PC-9 (cell line): ENCODE measurements at regions of chr22 and their contacts with region 1.

Region 1: GRCh38 chr22:29972121-29972520 is 89.1 kb downstream of the MTMR3 start:
- DNase-seq: no peak
- H3K4me3 ChIP-seq: no peak overlapping the region
- H3K27ac ChIP-seq: no peak overlapping the region
- H3K4me1 ChIP-seq: peaks cover 5% of the 10 kb centered on the region; the same call in 1 of the 2 replicates
- H3K27me3 ChIP-seq: no peaks in the 10 kb centered on the region
- CTCF ChIP-seq: no peak

Region 2: DNA sequence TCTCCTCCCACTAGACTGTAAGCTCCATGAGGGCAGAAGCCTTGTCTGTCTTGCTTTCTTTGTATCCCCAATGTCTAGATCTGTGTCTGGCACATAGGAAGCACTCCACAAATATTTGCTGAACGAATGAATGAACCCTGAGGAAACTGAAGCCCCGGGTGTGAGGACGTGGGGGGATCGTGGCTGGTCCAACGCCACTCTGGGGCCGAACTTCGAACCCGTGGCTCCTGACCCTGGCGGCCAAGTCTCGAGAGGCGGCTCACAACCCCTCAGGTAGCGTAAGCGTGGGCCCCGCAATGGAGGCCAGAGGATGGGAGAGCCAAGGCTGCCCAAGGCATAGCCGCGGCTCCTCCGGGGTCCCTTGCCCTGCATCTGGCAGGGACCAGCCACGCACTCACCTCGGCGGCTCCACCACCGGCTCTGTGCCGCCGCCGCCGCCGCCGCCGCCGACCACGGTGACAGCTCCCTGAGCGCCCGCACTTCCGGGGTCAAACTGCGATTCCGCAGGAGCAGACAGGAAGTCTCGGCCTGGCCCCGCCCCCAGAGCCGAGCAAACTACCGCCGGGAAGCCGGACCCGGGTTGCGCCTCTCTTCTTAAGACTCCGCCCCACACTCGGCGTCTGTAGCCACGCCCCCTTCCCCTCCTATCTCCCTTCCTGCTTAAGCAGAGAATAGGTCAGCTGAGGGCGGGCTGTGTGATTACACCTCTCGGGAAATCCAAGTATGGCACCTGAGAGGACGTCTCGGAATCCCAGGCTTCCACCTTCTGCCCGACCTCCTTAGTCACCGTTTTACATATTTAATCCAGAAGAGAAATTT is 134.1 kb before region 1 on chr22 and contains the start of gene ASCC2:
- CTCF ChIA-PET with region 1: no interaction called
- POLR2A ChIA-PET with region 1: interaction called, 24 read pairs
- intact Hi-C with region 1: no loop called
- DNase-seq: peak; percentile 95
- H3K4me3 ChIP-seq: peak within 1 kb of the TSS; percentile 95
- H3K27ac ChIP-seq: peak within 1 kb of the TSS; percentile 67
- H3K4me1 ChIP-seq: peaks cover 32% of the 10 kb centered on the region
- H3K27me3 ChIP-seq: no peaks in the 10 kb centered on the region
- CTCF ChIP-seq: no peak
- total RNA-seq, gene ASCC2: 39.9 and 43.3 TPM in 2 replicates

Region 3: GRCh38 chr22:30742291-30743256 is 770.5 kb after region 1 on chr22:
- CTCF ChIA-PET with region 1: no interaction called
- POLR2A ChIA-PET with region 1: no interaction called
- intact Hi-C with region 1: no loop called
- DNase-seq: no peak
- H3K4me3 ChIP-seq: no peak overlapping the region
- H3K27ac ChIP-seq: no peak overlapping the region
- H3K4me1 ChIP-seq: no peaks in the 10 kb centered on the region
- H3K27me3 ChIP-seq: no peaks in the 10 kb centered on the region
- CTCF ChIP-seq: no peak